CD4-positive, alpha-beta T cell (primary cell): ENCODE measurements at regions of chr11 and their contacts with region 1.

Region 1: DNA sequence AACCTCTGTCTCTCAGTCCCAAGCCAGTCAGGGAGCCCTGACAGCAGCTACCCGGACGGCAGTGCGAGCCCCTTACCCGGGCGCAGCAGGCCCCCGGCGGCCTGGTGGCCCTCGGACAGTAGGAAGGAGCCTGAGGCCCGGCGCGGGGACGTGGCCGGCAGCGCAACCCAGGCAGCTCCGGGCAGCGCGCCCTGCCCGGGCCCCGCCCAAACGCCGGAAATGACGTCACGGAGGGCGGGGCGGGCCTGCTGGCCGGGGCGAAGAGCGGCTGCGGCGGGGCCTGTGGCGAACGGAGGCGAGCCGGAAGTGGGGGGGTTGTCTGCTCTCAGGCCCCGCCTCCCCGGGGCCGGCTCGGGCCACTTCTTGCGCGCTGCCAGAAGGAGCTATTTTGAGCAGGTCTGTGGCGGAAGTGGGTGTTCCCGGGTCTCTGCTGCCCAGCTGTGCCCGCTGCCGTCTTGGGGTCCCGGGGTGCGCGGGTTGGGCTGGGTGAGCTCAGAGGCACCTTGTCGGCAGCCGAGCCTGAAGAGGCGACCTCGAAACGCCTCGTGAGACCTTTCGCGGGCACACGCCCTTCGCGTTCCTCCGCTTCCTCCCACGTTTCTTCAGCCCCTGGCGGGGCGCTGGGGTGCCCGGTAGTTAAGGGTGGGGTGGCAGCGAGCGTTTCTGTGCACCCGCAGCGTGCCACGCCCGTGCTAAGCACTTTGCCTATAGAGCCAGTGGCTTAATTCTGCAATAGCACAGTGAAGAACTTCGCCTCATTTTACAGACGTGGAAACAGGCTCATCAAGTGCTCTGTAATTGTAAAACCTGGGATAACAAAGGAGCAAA is at the start of gene C11orf24:
- DNase-seq: peak; percentile 85 to 96 (median 92)
- ATAC-seq: peak; percentile 84
- H3K4me3 ChIP-seq: peak within 1 kb of the TSS; percentile 93
- H3K4me3 Mint-ChIP-seq: peak within 1 kb of the TSS; percentile 93
- H3K27ac ChIP-seq: peak within 1 kb of the TSS; percentile 86 to 89
- H3K27ac Mint-ChIP-seq: peak within 1 kb of the TSS; percentile 95
- H3K4me1 ChIP-seq: peaks cover 30% of the 10 kb centered on the region
- H3K4me1 Mint-ChIP-seq: peaks cover 42% of the 10 kb centered on the region
- H3K27me3 ChIP-seq: no peaks in the 10 kb centered on the region
- H3K27me3 Mint-ChIP-seq: no peaks in the 10 kb centered on the region
- CTCF ChIP-seq: no peak
- total RNA-seq, gene C11orf24: 8.0 to 8.5 TPM

Region 2: GRCh38 chr11:67665541-67666362 is 606.2 kb before region 1 on chr11:
- CTCF ChIA-PET with region 1: no interaction called
- POLR2A ChIA-PET with region 1: no interaction called
- intact Hi-C with region 1: no loop called
- DNase-seq: peak in 1 of 14 experiments; percentile 13
- ATAC-seq: no peak
- H3K4me3 ChIP-seq: no peak overlapping the region
- H3K4me3 Mint-ChIP-seq: no peak overlapping the region
- H3K27ac ChIP-seq: no peak overlapping the region
- H3K27ac Mint-ChIP-seq: no peak overlapping the region
- H3K4me1 ChIP-seq: no peaks in the 10 kb centered on the region
- H3K4me1 Mint-ChIP-seq: no peaks in the 10 kb centered on the region
- H3K27me3 ChIP-seq: no peaks in the 10 kb centered on the region
- H3K27me3 Mint-ChIP-seq: no peaks in the 10 kb centered on the region
- CTCF ChIP-seq: no peak

Region 3: DNA sequence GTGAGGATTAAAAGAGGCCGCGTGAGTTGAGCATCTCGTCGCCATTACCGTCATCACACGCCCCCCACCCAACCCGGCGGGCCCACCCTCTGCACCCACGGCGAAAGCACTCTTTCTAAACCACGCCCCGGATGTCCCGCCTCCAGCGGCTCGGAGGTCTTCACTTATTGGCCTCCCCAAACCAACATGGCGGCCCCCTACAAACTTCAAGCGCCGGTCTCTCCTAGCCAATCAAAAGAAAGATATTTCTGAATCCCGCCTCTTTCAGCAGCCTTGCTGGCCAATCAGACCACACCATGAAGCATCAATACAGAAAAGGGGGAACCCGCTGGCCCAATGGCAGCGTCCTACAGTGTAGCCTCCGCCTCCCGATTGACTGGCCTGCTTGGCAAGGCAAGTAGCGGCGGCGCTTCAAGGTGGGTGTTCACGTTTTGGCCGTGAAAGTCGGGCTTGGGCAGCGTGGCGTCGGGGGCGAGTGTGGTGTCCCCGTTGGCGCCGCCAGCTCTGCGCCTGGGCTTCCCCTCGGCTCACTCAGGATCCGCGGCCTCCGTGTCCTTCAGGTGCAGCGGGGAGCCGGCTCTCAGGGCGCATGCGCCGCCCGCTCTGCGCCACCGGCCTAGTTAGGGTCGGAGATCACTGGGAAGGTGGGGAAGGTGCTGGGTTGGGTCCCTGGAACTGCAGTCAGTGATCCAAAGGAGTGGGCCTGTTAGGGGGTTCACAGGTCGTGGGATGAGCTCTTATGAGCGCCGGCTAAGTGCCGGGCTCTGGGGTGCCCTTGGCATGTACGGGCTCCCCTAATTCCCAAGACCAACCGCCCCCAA is 241.5 kb before region 1 on chr11 and contains the start of gene NDUFS8:
- CTCF ChIA-PET with region 1: no interaction called
- POLR2A ChIA-PET with region 1: no interaction called
- intact Hi-C with region 1: loop called in 1 of 2 experiments (anchors 2 kb)
- DNase-seq: peak; percentile 90 to 99 (median 94)
- ATAC-seq: peak; percentile 95
- H3K4me3 ChIP-seq: peak within 1 kb of the TSS; percentile 79
- H3K4me3 Mint-ChIP-seq: peak within 1 kb of the TSS; percentile 94
- H3K27ac ChIP-seq: peak within 1 kb of the TSS; percentile 76 to 79
- H3K27ac Mint-ChIP-seq: peak within 1 kb of the TSS; percentile 87
- H3K4me1 ChIP-seq: peaks cover 43% of the 10 kb centered on the region
- H3K4me1 Mint-ChIP-seq: peaks cover 24% of the 10 kb centered on the region
- H3K27me3 ChIP-seq: no peaks in the 10 kb centered on the region
- H3K27me3 Mint-ChIP-seq: no peaks in the 10 kb centered on the region
- CTCF ChIP-seq: no peak
- total RNA-seq, gene NDUFS8: 70.5 to 72.5 TPM

Region 4: DNA sequence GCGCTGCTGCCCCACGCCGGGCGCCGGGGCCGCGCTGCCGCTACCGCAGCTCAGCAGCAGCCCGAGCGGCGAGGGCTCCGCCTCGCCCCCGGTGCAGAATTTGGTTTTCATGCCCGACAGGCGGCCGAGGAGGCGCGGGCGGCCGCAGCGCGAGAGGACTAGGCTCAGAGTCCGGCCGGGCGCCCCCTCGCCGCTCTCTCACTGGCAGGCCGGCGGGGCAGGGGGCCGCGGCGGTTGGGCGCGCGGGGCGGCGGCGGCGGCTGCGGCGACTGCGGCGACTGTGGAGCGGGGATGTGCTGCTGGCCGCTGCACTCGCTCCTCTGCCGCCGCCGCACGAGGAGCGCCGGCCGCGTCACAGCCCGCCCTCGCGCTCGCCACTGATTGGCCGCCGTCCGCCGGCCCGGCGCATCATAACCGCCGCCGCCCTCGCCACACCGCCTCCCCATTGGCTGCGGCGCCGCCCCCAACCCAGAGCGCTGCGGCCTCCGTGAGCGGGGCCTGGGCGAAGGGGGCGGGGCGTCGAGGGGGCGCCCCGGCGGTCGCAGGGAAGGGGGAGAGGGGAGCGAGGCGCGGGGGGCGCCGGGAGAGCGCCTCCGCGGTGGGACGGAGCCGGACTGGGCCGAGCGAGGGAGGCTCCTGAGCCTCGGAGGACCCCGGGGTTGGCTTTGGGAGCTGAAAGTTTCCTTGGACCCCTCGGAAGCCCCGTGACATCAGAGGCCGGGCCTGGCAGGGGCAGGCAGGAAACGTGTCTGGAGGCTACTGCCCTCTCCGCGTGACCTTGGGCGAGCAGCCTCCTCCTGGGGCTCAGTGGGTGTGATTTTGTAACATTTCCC is 150.7 kb before region 1 on chr11 and contains the start of gene CHKA:
- CTCF ChIA-PET with region 1: no interaction called
- POLR2A ChIA-PET with region 1: no interaction called
- intact Hi-C with region 1: loop called in 1 of 2 experiments (anchors 5 kb)
- DNase-seq: peak; percentile 61 to 93 (median 80)
- ATAC-seq: peak; percentile 71
- H3K4me3 ChIP-seq: peak within 1 kb of the TSS; percentile 66
- H3K4me3 Mint-ChIP-seq: peak within 1 kb of the TSS; percentile 88
- H3K27ac ChIP-seq: peak within 1 kb of the TSS in 1 of 2 donors; percentile 23
- H3K27ac Mint-ChIP-seq: peak within 1 kb of the TSS; percentile 85
- H3K4me1 ChIP-seq: peaks cover 15% of the 10 kb centered on the region
- H3K4me1 Mint-ChIP-seq: peaks cover 9% of the 10 kb centered on the region
- H3K27me3 ChIP-seq: no peaks in the 10 kb centered on the region
- H3K27me3 Mint-ChIP-seq: peaks cover under 1% of the 10 kb centered on the region
- CTCF ChIP-seq: no peak
- total RNA-seq, gene CHKA: 30.1 to 31.4 TPM

Region 5: DNA sequence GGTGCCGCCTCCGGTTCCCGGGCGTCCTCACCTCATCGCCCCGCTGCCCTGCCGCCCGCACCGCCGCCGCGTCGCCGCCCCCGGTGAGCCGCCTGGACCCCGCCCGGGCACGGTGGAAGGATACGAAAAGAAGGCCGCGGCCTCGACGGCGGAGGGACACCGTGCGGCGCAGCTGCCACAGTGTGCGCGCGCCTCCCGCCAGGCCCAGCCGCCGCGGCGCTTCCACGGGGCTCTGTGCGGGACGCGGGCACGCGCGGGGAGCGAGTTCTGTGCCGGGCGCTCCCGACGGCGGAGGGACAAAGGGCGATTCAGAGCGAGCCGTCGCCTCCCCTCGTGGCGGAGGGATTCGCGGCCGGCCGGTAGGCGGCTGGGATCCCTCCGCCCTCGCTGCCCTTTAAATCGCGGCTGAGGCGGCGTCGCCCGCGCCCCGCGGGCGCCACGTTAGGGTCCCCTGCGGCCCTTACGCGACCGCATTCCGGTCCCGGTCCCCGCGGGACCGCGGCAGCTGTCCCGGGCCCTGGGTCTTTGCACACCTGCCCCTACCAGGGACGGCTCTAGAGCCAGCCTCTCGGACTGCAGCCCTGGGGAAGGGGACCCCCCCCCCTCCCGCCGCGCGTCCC is 58.3 kb before region 1 on chr11:
- CTCF ChIA-PET with region 1: interaction called, 6 read pairs
- POLR2A ChIA-PET with region 1: interaction called, 5 read pairs
- intact Hi-C with region 1: loop called in 1 of 2 experiments (anchors 5 kb)
- DNase-seq: peak; percentile 60 to 95 (median 80)
- ATAC-seq: peak; percentile 32
- H3K4me3 ChIP-seq: peak overlapping the region; percentile 78
- H3K4me3 Mint-ChIP-seq: peak overlapping the region; percentile 73
- H3K27ac ChIP-seq: peak overlapping the region in 1 of 2 donors; percentile 74
- H3K27ac Mint-ChIP-seq: peak overlapping the region; percentile 77
- H3K4me1 ChIP-seq: peaks cover 41% of the 10 kb centered on the region
- H3K4me1 Mint-ChIP-seq: peaks cover 51% of the 10 kb centered on the region
- H3K27me3 ChIP-seq: no peaks in the 10 kb centered on the region
- H3K27me3 Mint-ChIP-seq: peaks cover 13% of the 10 kb centered on the region
- CTCF ChIP-seq: no peak

Region 6: GRCh38 chr11:68257475-68258362 is 14.3 kb before region 1 on chr11:
- CTCF ChIA-PET with region 1: interaction called, 13 read pairs
- POLR2A ChIA-PET with region 1: interaction called, 17 read pairs
- intact Hi-C with region 1: loop called in 1 of 2 experiments (anchors 1 kb)
- DNase-seq: peak; percentile 88 to 98 (median 92)
- ATAC-seq: peak; percentile 96
- H3K4me3 ChIP-seq: no peak overlapping the region
- H3K4me3 Mint-ChIP-seq: no peak overlapping the region
- H3K27ac ChIP-seq: no peak overlapping the region
- H3K27ac Mint-ChIP-seq: no peak overlapping the region
- H3K4me1 ChIP-seq: peaks cover 14% of the 10 kb centered on the region
- H3K4me1 Mint-ChIP-seq: peaks cover 5% of the 10 kb centered on the region
- H3K27me3 ChIP-seq: no peaks in the 10 kb centered on the region
- H3K27me3 Mint-ChIP-seq: no peaks in the 10 kb centered on the region
- CTCF ChIP-seq: peak; percentile 81

Region 7: GRCh38 chr11:68297812-68298658 is 26.0 kb after region 1 on chr11:
- CTCF ChIA-PET with region 1: interaction called, 16 read pairs
- POLR2A ChIA-PET with region 1: interaction called, 8 read pairs
- intact Hi-C with region 1: loop called (anchors 1 kb)
- DNase-seq: peak; percentile 45 to 86 (median 66)
- ATAC-seq: peak; percentile 98
- H3K4me3 ChIP-seq: no peak overlapping the region
- H3K4me3 Mint-ChIP-seq: no peak overlapping the region
- H3K27ac ChIP-seq: no peak overlapping the region
- H3K27ac Mint-ChIP-seq: no peak overlapping the region
- H3K4me1 ChIP-seq: peaks cover 8% of the 10 kb centered on the region
- H3K4me1 Mint-ChIP-seq: no peaks in the 10 kb centered on the region
- H3K27me3 ChIP-seq: no peaks in the 10 kb centered on the region
- H3K27me3 Mint-ChIP-seq: no peaks in the 10 kb centered on the region
- CTCF ChIP-seq: peak; percentile 95

Region 8: DNA sequence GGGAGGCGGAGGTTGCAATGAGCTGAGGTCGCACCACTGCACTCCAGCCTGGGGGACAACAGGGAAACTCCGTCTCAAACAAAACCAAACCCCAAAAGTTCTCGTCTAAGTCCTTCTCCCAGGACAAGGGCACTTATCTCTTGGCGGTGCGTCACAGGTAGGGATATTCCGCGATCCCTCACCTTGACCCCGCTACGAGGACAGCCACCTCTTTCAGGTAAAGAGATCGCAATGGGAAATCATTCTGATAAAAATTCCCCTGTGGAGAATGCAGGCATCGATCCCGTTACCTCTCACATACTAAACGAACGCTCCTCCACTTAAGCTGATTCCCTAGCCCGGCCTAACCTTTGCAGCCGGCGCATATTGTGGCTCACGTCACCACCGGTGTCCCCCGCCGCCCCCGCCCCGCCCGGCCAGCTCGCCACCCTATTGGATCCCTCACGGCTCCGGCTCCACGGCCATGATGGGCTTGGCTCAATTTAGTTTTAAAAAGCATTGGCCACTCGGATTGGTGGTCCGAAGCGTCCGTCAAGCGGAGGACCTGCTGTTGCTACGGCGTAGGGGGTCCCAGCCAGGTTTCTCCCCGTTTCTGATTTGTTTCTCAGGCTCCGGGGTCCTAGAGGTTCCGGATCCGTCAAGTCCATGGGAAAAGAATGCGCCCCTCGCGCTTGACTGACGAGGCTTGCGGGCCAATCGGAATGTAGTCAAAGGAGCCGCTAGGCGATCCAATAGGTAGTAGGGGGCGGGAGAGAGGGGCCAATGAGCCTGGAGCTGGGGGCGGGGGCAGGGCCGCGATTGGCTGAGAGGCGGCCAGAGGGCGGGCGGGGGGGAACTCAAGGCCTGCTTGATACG is 188.1 kb after region 1 on chr11:
- CTCF ChIA-PET with region 1: no interaction called
- POLR2A ChIA-PET with region 1: interaction called, 3 read pairs
- intact Hi-C with region 1: loop called in 1 of 2 experiments (anchors 5 kb)
- DNase-seq: peak; percentile 89 to 99 (median 94)
- ATAC-seq: peak; percentile 90
- H3K4me3 ChIP-seq: peak overlapping the region; percentile 92
- H3K4me3 Mint-ChIP-seq: peak overlapping the region; percentile 100
- H3K27ac ChIP-seq: peak overlapping the region; percentile 95 to 99
- H3K27ac Mint-ChIP-seq: peak overlapping the region; percentile 100
- H3K4me1 ChIP-seq: peaks cover 40% of the 10 kb centered on the region
- H3K4me1 Mint-ChIP-seq: peaks cover 39% of the 10 kb centered on the region
- H3K27me3 ChIP-seq: no peaks in the 10 kb centered on the region
- H3K27me3 Mint-ChIP-seq: peaks cover 8% of the 10 kb centered on the region
- CTCF ChIP-seq: no peak